ENCODE measurements at regions of chr9 and their contacts with region 1.

Region 1: GRCh38 chr9:124852829-124853531 is at the start of gene WDR38:
- DNase-seq: peak; percentile 78
- ATAC-seq: peak; percentile 85
- H3K4me3 ChIP-seq: peak within 1 kb of the TSS; percentile 32 to 51
- H3K27ac ChIP-seq: peak within 1 kb of the TSS; percentile 37; the same call in 1 of the 2 replicates
- H3K4me1 ChIP-seq: peaks cover 5 to 30% of the 10 kb centered on the region in 2 experiments; a peak in 3 of 4 replicates
- H3K27me3 ChIP-seq: no peaks in the 10 kb centered on the region
- CTCF ChIP-seq: peak in 2 of 3 experiments; percentile 86 to 99; a peak in 4 of 6 replicates
- POLR2A ChIP-seq: no peak
- RAD21 ChIP-seq: no peak
- total RNA-seq, gene WDR38: not detected

Region 2: GRCh38 chr9:124415102-124415851 is 437.7 kb before region 1 on chr9 and contains the start of gene PSMB7:
- CTCF ChIA-PET with region 1: interaction called, 3 read pairs
- POLR2A ChIA-PET with region 1: no interaction called
- RAD21 ChIA-PET with region 1: no interaction called
- intact Hi-C with region 1: loop called (anchors 10 kb)
- DNase-seq: peak; percentile 97
- ATAC-seq: peak; percentile 76
- H3K4me3 ChIP-seq: peak within 1 kb of the TSS; percentile 88 to 99
- H3K27ac ChIP-seq: peak within 1 kb of the TSS; percentile 81
- H3K4me1 ChIP-seq: peaks cover 4 to 33% of the 10 kb centered on the region in 2 experiments; a peak in 3 of 4 replicates
- H3K27me3 ChIP-seq: no peaks in the 10 kb centered on the region
- CTCF ChIP-seq: peak; percentile 58 to 80 (median 77); a peak in 5 of 6 replicates
- POLR2A ChIP-seq: no peak
- RAD21 ChIP-seq: no peak
- total RNA-seq, gene PSMB7: 222 TPM

Region 3: GRCh38 chr9:124764774-124765438 is 88.1 kb before region 1 on chr9:
- CTCF ChIA-PET with region 1: interaction called, 601 read pairs
- POLR2A ChIA-PET with region 1: no interaction called
- RAD21 ChIA-PET with region 1: interaction called, 47 to 49 read pairs
- intact Hi-C with region 1: no loop called
- DNase-seq: no peak
- ATAC-seq: peak; percentile 41; the same call in 1 of the 2 replicates
- H3K4me3 ChIP-seq: no peak overlapping the region
- H3K27ac ChIP-seq: no peak overlapping the region
- H3K4me1 ChIP-seq: peaks cover 25 to 27% of the 10 kb centered on the region in 2 experiments
- H3K27me3 ChIP-seq: no peaks in the 10 kb centered on the region
- CTCF ChIP-seq: peak in 2 of 3 experiments; percentile 23 to 46; a peak in 3 of 6 replicates
- POLR2A ChIP-seq: no peak
- RAD21 ChIP-seq: no peak

Region 4: GRCh38 chr9:124788542-124789217 is 64.3 kb before region 1 on chr9:
- CTCF ChIA-PET with region 1: interaction called, 15 read pairs
- POLR2A ChIA-PET with region 1: no interaction called
- RAD21 ChIA-PET with region 1: interaction called in 1 of 2 experiments, 13 read pairs
- intact Hi-C with region 1: no loop called
- DNase-seq: no peak
- ATAC-seq: no peak
- H3K4me3 ChIP-seq: no peak overlapping the region
- H3K27ac ChIP-seq: no peak overlapping the region
- H3K4me1 ChIP-seq: peaks cover 0 to 6% of the 10 kb centered on the region in 2 experiments; a peak in 1 of 4 replicates
- H3K27me3 ChIP-seq: no peaks in the 10 kb centered on the region
- CTCF ChIP-seq: no peak
- POLR2A ChIP-seq: no peak
- RAD21 ChIP-seq: no peak

Region 5: GRCh38 chr9:124812401-124813016 is 40.5 kb before region 1 on chr9:
- CTCF ChIA-PET with region 1: interaction called, 15 read pairs
- POLR2A ChIA-PET with region 1: interaction called, 4 read pairs
- RAD21 ChIA-PET with region 1: interaction called in 1 of 2 experiments, 3 read pairs
- intact Hi-C with region 1: loop called (anchors 2 kb)
- DNase-seq: peak; percentile 84
- ATAC-seq: peak; percentile 63
- H3K4me3 ChIP-seq: peak overlapping the region in 1 of 2 experiments; percentile 37; a peak in 2 of 4 replicates
- H3K27ac ChIP-seq: peak overlapping the region; percentile 91
- H3K4me1 ChIP-seq: peaks cover 45 to 61% of the 10 kb centered on the region in 2 experiments
- H3K27me3 ChIP-seq: no peaks in the 10 kb centered on the region
- CTCF ChIP-seq: no peak
- POLR2A ChIP-seq: no peak
- RAD21 ChIP-seq: no peak

Region 6: DNA sequence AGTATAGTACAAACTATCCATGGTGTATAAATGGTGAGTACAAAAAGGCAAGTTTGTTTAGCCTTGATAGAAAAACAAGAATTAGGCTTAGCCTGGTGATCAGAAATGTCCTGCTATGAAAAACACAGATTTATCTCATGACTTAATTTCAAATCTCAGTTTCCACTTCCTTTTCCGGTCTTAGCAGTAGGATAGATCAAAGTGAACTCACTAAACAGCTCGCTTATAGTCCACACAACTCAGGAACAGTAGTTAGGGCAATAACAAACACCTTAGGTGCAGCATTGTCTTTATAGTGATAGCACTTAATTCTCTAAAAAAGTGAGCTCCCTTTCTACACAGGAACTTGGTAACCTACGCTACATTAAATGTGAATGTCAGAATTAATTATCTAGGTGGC is 76.5 kb after region 1 on chr9:
- CTCF ChIA-PET with region 1: no interaction called
- POLR2A ChIA-PET with region 1: no interaction called
- RAD21 ChIA-PET with region 1: no interaction called
- intact Hi-C with region 1: no loop called
- DNase-seq: no peak
- ATAC-seq: no peak
- H3K4me3 ChIP-seq: no peak overlapping the region
- H3K27ac ChIP-seq: no peak overlapping the region
- H3K4me1 ChIP-seq: no peaks in the 10 kb centered on the region
- H3K27me3 ChIP-seq: no peaks in the 10 kb centered on the region
- CTCF ChIP-seq: no peak
- POLR2A ChIP-seq: no peak
- RAD21 ChIP-seq: no peak

Region 7: DNA sequence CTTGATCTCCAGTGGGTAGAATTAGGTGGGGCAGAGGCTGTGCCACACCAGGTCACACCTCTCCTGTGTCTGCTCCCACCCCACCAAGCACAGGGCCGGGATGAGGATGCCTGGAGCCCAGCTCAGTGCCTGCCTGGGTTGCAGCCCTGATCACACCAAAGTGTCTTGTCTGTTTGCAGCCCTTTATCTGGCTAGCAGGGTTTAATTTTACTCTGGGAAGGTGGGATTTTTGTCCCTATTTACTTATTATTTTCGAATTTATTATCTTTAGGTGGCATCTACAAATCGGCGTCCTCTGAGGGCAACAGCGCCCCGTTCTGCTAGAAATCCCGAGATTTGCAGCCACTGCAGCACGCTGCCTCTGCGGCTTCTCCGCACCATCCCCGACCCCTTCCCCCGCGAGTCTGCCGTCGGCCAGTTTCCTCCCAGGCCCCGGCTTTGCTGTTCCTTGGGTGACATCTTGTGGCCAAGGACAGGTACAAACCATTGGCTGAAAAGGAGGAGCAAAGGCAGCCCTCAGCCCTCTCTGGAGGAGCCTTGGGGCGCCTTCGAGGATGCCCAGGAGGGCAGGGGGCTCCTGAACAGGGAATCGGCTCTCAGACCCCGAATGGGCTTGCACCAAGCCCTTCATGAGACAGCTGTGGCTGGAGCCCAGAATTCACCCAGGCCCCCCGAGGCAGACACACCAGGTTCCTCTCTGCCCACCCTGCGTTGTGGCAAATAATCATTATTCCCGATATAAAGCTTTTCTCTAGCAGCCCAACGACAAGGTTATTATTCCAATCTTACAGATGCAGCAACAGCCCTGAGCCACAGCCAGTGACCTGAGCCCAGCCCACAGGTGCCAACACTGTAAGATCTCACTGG is 521.7 kb after region 1 on chr9:
- CTCF ChIA-PET with region 1: interaction called, 4 read pairs
- POLR2A ChIA-PET with region 1: no interaction called
- RAD21 ChIA-PET with region 1: no interaction called
- intact Hi-C with region 1: loop called (anchors 1 kb)
- DNase-seq: peak; percentile 28
- ATAC-seq: peak; percentile 95
- H3K4me3 ChIP-seq: no peak overlapping the region
- H3K27ac ChIP-seq: no peak overlapping the region
- H3K4me1 ChIP-seq: peaks cover 0 to 8% of the 10 kb centered on the region in 2 experiments; a peak in 1 of 4 replicates
- H3K27me3 ChIP-seq: no peaks in the 10 kb centered on the region
- CTCF ChIP-seq: peak; percentile 80 to 86 (median 81)
- POLR2A ChIP-seq: no peak
- RAD21 ChIP-seq: peak; percentile 98